Heart left ventricle (tissue), 16 donors: ENCODE measurements at regions of chr7 and their contacts with region 1.

Region 1: GRCh38 chr7:87129848-87130247 is 22.4 kb upstream of the DMTF1 start:
- DNase-seq: no peak
- ATAC-seq: no peak
- H3K4me3 ChIP-seq: no peak overlapping the region
- H3K27ac ChIP-seq: no peak overlapping the region
- H3K4me1 ChIP-seq: no peaks in the 10 kb centered on the region
- H3K27me3 ChIP-seq: no peaks in the 10 kb centered on the region
- CTCF ChIP-seq: no peak
- POLR2A ChIP-seq: no peak

Region 2: GRCh38 chr7:87075671-87076404 is 54.0 kb before region 1 on chr7:
- intact Hi-C with region 1: loop called in 1 of 10 experiments (anchors 10 kb)
- DNase-seq: no peak
- ATAC-seq: no peak
- H3K4me3 ChIP-seq: no peak overlapping the region
- H3K27ac ChIP-seq: no peak overlapping the region
- H3K4me1 ChIP-seq: no peaks in the 10 kb centered on the region
- H3K27me3 ChIP-seq: no peaks in the 10 kb centered on the region
- CTCF ChIP-seq: no peak
- POLR2A ChIP-seq: no peak

Region 3: DNA sequence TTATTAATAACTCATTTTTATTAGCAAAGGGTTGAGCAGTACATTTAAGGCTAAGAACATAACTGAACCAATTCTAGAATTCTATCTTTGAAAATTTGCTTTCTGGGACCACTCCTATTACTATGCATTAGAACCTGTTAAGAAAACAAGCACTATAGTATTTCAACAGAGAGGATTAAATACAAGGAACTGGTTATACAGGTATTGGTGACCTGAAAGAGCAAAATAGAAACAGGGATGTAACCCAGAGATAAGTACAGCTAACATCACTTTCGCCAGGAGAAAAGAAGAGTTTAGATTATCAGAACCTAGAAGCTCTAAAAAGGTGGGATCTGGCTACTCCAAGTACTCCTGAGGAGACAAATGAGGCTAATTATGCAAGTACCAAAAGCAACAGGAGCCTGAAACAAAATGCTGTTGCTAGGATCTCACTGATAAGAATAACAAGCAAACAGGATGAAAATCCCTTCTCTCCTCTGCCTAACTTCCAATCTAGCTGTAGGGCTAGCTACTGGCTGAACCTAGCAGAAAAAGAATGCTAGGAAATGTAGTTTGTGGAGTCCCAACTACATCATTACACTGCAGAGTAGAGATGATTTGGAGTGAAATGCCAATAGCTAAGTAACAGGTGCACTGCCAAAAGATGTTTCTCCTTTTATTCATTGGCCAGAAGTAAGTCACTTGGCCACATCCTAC is 38.2 kb before region 1 on chr7:
- intact Hi-C with region 1: no loop called
- DNase-seq: no peak
- ATAC-seq: no peak
- H3K4me3 ChIP-seq: no peak overlapping the region
- H3K27ac ChIP-seq: no peak overlapping the region
- H3K4me1 ChIP-seq: no peaks in the 10 kb centered on the region
- H3K27me3 ChIP-seq: no peaks in the 10 kb centered on the region
- CTCF ChIP-seq: no peak
- POLR2A ChIP-seq: no peak

Region 4: GRCh38 chr7:87173471-87173870 is 43.6 kb after region 1 on chr7:
- intact Hi-C with region 1: no loop called
- DNase-seq: no peak
- ATAC-seq: no peak
- H3K4me3 ChIP-seq: no peak overlapping the region
- H3K27ac ChIP-seq: no peak overlapping the region
- H3K4me1 ChIP-seq: peaks cover 0 to 5% (median 0%) of the 10 kb centered on the region in 12 donors
- H3K27me3 ChIP-seq: no peaks in the 10 kb centered on the region
- CTCF ChIP-seq: no peak
- POLR2A ChIP-seq: no peak